Colonic mucosa (tissue), 4 donors: ENCODE measurements at regions of chr13 and their contacts with region 1.

Region 1: GRCh38 chr13:80126382-80127068 is 214.4 kb downstream of the SPRY2 start:
- DNase-seq: no peak
- H3K4me3 ChIP-seq: no peak overlapping the region
- H3K27ac ChIP-seq: no peak overlapping the region
- H3K4me1 ChIP-seq: peaks cover 3% of the 10 kb centered on the region
- H3K27me3 ChIP-seq: no peaks in the 10 kb centered on the region
- CTCF ChIP-seq: no peak

Region 2: DNA sequence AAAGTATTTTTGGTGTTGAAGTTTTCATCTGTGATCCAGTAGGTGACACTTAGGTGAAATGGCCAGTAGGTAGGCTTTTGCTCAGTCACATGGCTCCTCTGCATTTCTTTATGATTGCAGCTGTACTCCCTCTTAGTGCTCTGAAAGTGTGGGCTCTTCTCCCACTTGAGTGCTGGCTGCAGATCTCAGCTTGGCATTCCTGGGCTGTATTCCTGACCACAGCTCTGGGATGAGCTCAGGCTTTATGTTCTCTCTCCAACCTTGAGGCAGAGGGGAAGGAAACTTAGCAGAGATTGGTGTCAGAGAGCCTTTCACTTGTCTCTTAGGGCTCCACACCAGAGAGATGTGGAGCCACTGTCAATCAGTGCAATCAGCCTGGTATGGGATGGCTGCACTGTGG is 391.3 kb before region 1 on chr13:
- intact Hi-C with region 1: no loop called
- DNase-seq: no peak
- H3K4me3 ChIP-seq: no peak overlapping the region
- H3K27ac ChIP-seq: no peak overlapping the region
- H3K4me1 ChIP-seq: no peaks in the 10 kb centered on the region
- H3K27me3 ChIP-seq: no peaks in the 10 kb centered on the region
- CTCF ChIP-seq: no peak

Region 3: GRCh38 chr13:80094526-80094925 is 32.0 kb before region 1 on chr13:
- intact Hi-C with region 1: loop called (anchors 5 kb)
- DNase-seq: no peak
- H3K4me3 ChIP-seq: no peak overlapping the region
- H3K27ac ChIP-seq: no peak overlapping the region
- H3K4me1 ChIP-seq: no peaks in the 10 kb centered on the region
- H3K27me3 ChIP-seq: no peaks in the 10 kb centered on the region
- CTCF ChIP-seq: no peak